ENCODE measurements at regions of chr17 and their contacts with region 1.

Region 1: GRCh38 chr17:82153745-82154375 is 55.8 kb upstream of the FASN start:
- H3K4me3 ChIP-seq: no peak overlapping the region
- H3K27ac ChIP-seq: no peak overlapping the region
- H3K4me1 ChIP-seq: no peaks in the 10 kb centered on the region
- CTCF ChIP-seq: peak; percentile 96

Region 2: DNA sequence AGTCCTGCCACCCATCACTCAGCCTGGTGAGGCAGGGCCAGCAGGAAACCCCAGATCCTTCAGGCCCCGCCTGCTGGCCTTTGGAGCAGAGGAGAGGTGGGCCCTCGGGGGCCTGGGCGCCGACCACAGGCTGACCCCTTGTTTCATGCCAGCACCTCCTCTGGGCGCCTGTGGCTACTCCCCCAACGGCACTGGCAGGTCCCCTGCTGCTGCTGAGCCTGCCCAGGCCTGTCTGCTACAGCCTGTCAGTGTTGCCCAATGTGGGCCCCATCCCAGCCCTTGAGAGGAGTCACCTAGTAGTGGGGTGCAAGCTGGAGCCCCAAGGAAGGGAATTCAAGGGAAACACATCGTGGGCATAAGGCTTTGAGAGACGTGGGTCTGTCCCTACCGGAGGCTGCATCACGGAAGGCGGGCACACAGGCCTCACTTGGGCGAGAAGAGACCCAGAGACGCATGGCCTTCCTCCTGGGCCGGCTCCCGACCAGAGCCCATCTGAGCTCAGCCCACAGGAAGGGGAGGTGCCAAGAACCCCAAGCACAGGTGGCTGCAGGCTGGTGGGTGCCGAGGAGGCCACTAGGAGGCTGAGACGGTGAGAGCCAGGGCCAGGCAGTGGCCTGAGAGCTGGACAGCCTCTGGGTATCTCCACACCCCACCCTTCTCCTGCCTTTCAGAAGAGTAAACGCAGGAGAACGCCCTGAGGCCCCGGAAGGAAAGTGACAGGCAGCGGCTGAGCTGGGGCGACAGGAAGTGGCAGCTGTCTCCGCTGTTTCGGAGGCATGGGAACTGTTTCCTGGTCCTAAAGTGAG is 47.8 kb before region 1 on chr17:
- CTCF ChIA-PET with region 1: interaction called, 13 read pairs
- POLR2A ChIA-PET with region 1: no interaction called
- H3K4me3 ChIP-seq: no peak overlapping the region
- H3K27ac ChIP-seq: peak overlapping the region; percentile 64
- H3K4me1 ChIP-seq: peaks cover 10% of the 10 kb centered on the region
- CTCF ChIP-seq: peak; percentile 82